K562 (cell line): ENCODE measurements at regions of chr5 and their contacts with region 1.

Region 1: DNA sequence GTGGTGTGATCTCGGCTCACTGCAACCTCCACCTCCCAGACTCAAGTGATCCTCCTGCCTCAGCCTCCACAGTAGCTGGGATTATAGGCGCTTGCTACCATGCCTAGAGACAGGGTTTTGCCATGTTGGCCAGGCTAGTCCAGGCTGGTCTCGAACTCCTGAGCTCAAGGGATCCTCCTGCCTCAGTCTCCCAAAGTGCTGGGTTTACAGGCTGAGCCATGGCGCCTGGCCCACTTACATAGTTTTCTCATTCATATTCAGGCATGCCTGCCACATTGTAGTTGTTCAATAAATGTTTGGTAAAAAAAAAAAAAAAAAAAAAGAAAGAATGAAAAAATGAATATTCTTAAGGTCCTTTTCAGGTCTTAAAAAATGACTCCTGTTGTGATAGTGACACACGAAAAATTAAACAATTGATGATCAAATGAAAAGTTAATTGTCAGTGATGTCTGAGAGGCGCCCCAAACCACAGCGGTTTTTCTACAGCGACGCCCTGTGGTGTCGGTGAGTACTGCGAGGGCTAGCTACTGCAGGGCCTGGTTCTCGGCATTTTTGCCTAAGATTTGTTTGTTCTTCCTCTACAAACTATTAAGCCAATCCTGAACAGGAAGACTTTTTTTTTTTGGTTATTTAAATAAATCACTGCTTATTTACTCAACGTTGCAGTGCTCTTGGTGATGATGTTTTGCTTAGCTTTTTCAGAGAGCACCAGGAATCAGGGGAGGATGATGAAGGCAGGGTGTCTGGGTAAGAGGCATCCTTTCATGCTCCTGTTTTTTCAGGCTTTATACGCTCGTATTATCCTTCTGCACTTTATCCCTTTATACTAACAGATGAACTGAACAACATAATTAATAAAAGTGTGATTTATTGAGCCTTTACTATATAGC is 67.0 kb upstream of the DPYSL3 start:
- DNase-seq: peak; percentile 8 to 36 (median 26)
- ATAC-seq: peak; percentile 72
- H3K4me3 ChIP-seq: no peak overlapping the region
- H3K27ac ChIP-seq: no peak overlapping the region
- H3K4me1 ChIP-seq: no peaks in the 10 kb centered on the region
- H3K27me3 ChIP-seq: no peaks in the 10 kb centered on the region
- CTCF ChIP-seq: peak; percentile 42 to 62 (median 45)
- EP300 ChIP-seq: no peak
- POLR2A ChIP-seq: no peak
- RAD21 ChIP-seq: peak in 1 of 2 experiments; percentile 30; a peak in 2 of 4 replicates

Region 2: DNA sequence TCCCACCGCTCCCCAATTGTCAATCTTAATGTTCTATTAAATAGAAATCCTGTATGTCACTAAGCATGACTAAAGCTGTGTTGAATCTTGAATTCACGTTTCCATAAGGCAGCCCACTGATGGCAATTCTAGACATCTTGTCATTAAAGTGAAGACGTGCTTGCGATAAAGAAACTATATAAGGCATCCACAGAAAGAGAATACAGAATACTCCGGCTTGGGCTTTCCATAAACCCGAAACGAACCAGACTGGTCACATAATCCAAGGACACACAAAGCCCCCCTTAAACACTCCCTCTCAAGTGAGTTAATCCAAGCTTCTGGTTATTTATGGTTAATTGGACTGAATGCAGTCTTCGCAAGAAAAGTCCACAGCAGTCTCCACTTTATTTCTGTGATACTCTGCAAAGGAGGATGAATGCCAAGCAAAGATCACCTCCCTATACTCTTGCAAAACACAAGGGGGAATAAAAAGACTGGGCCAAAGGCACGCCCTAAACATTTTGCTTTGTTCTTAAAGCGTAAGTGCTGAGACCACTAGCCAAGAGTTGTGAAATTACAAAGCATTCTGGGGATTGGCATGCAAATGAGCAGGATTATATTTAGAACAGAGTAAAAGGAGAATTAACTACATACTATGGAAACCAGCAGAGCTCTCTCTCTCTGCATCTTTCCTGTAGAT is 121.8 kb before region 1 on chr5:
- CTCF ChIA-PET with region 1: no interaction called
- POLR2A ChIA-PET with region 1: no interaction called
- in situ Hi-C with region 1: no loop called
- intact Hi-C with region 1: loop called (anchors 5 kb)
- DNase-seq: no peak
- ATAC-seq: no peak
- H3K4me3 ChIP-seq: no peak overlapping the region
- H3K27ac ChIP-seq: no peak overlapping the region
- H3K4me1 ChIP-seq: peaks cover 0 to 14% of the 10 kb centered on the region in 2 experiments; a peak in 2 of 5 replicates
- H3K27me3 ChIP-seq: peaks cover 0 to 10% of the 10 kb centered on the region in 2 experiments; a peak in 1 of 5 replicates
- CTCF ChIP-seq: no peak
- EP300 ChIP-seq: no peak
- POLR2A ChIP-seq: no peak
- RAD21 ChIP-seq: no peak